Transverse colon (tissue), 4 donors: ENCODE measurements at regions of chr5 and their contacts with region 1.

Region 1: GRCh38 chr5:36414869-36415282 is 113.2 kb upstream of the RANBP3L start:
- DNase-seq: no peak
- H3K4me3 ChIP-seq: no peak overlapping the region
- H3K27ac ChIP-seq: no peak overlapping the region
- H3K4me1 ChIP-seq: no peaks in the 10 kb centered on the region
- H3K27me3 ChIP-seq: no peaks in the 10 kb centered on the region
- CTCF ChIP-seq: peak; percentile 45 to 57 (median 52)
- EP300 ChIP-seq: no peak
- POLR2A ChIP-seq: no peak

Region 2: GRCh38 chr5:36507332-36507952 is 92.6 kb after region 1 on chr5:
- in situ Hi-C with region 1: loop called in 3 of 4 experiments (anchors 5 to 10 kb)
- intact Hi-C with region 1: loop called (anchors 5 kb)
- DNase-seq: peak; percentile 77
- H3K4me3 ChIP-seq: no peak overlapping the region
- H3K27ac ChIP-seq: no peak overlapping the region
- H3K4me1 ChIP-seq: no peaks in the 10 kb centered on the region
- H3K27me3 ChIP-seq: no peaks in the 10 kb centered on the region
- CTCF ChIP-seq: peak; percentile 68 to 85 (median 78)
- EP300 ChIP-seq: no peak
- POLR2A ChIP-seq: no peak

Region 3: GRCh38 chr5:36690041-36690961 is 275.4 kb after region 1 on chr5:
- in situ Hi-C with region 1: loop called in 3 of 4 experiments (anchors 10 to 25 kb)
- intact Hi-C with region 1: loop called (anchors 5 kb)
- DNase-seq: peak; percentile 79
- H3K4me3 ChIP-seq: peak overlapping the region; percentile 18 to 64 (median 44)
- H3K27ac ChIP-seq: peak overlapping the region; percentile 33 to 72 (median 70)
- H3K4me1 ChIP-seq: peaks cover 0 to 11% (median 7%) of the 10 kb centered on the region in 4 donors
- H3K27me3 ChIP-seq: no peaks in the 10 kb centered on the region
- CTCF ChIP-seq: peak; percentile 76 to 87 (median 82)
- EP300 ChIP-seq: no peak
- POLR2A ChIP-seq: no peak

Region 4: GRCh38 chr5:36728697-36729543 is 314.0 kb after region 1 on chr5:
- in situ Hi-C with region 1: loop called in 1 of 4 experiments (anchors 25 kb)
- intact Hi-C with region 1: no loop called
- DNase-seq: no peak
- H3K4me3 ChIP-seq: no peak overlapping the region
- H3K27ac ChIP-seq: no peak overlapping the region
- H3K4me1 ChIP-seq: no peaks in the 10 kb centered on the region
- H3K27me3 ChIP-seq: no peaks in the 10 kb centered on the region
- CTCF ChIP-seq: peak; percentile 55 to 70 (median 64)
- EP300 ChIP-seq: no peak
- POLR2A ChIP-seq: no peak